Naive thymus-derived CD8-positive, alpha-beta T cell (primary cell): ENCODE measurements at regions of chr6 and their contacts with region 1.

Region 1: DNA sequence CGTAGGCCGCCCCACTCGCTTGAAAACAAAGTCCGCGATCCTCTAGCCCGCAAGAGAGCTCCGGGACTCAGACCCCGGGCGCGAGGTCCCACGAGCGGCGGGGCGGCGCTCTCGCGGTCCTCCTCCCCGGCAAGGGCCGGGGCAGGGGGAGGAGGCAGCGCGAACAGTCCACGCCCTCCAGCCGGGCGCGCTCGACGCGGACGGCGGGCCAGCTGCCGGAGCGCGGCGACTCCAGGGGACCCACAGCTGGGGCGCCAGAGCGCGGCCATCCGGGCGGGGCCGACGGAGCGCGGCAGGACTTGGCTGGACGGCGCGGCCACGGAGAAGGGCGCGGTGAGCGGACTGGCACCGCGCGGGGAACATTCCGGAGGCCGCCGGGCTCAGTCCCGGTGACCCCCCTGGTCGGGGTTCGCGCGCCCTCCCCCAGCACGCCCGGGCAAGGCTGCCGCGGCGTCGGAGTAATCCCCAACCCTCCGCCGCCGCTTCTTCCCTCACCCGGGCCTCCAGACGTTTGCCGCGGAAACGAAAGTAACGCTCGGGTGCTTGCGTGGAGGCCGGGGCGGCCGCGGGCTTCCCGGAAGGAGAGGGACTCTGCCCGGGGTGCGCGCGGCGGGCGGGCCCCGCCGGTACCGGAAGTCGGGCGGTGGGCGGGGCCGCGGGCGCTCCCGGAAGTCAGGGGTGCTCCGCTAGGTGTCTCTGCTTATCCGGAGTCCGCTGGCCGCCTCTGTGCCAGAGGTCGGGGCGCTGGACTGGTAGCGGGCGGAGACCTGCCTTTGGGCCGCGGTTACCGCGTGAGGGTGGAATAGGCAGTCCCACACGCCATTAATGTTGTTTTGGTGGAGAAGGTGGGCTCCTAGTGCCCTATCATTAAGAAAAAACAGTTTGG is at the start of gene RIPK1:
- DNase-seq: peak; percentile 89 to 96 (median 94)
- ATAC-seq: peak; percentile 76 to 78
- H3K4me3 Mint-ChIP-seq: peak within 1 kb of the TSS; percentile 93 to 99 (median 94)
- H3K27ac Mint-ChIP-seq: peak within 1 kb of the TSS; percentile 93 to 99 (median 98)
- H3K4me1 Mint-ChIP-seq: peaks cover 20 to 78% (median 57%) of the 10 kb centered on the region in 4 donors
- H3K27me3 Mint-ChIP-seq: no peaks in the 10 kb centered on the region
- polyA plus RNA-seq, gene RIPK1: 9.5 to 17.5 (median 11.2) TPM

Region 2: DNA sequence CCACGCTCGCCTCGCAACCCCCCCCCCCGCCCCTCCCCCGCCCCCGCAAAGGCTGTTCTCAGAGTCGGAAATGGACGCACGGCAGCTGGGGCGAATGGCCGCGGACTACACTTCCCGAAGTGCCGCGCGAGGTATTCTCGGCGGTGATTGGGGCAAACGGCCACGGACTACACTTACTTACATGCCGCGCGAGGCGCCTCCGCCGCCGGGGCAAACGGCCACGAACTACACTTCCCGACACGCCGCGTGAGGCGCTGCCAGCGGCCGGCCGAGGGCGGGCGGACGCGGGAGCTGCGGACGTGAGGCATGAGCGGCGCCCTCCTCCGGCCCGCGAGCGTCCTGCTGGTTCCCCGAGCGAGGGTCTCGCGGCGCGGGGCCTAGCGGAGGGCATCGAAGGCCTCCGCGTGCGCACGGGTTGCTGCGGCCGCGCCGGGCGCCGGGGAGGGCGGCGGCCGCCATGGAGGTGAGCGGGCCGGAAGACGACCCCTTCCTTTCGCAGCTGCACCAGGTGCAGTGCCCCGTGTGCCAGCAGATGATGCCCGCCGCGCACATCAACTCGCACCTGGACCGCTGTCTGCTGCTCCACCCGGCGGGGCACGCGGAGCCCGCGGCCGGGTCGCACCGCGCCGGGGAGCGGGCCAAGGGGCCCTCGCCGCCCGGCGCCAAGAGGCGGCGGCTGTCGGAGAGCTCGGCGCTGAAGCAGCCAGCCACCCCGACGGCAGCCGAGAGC is 303.2 kb before region 1 on chr6 and contains the start of gene WRNIP1:
- POLR2A ChIA-PET with region 1: interaction called, 16 read pairs
- DNase-seq: peak; percentile 90 to 99 (median 97)
- ATAC-seq: peak; percentile 83 to 86
- H3K4me3 Mint-ChIP-seq: peak within 1 kb of the TSS; percentile 88 to 97 (median 95)
- H3K27ac Mint-ChIP-seq: peak within 1 kb of the TSS; percentile 94 to 100 (median 98)
- H3K4me1 Mint-ChIP-seq: peaks cover 19 to 56% (median 52%) of the 10 kb centered on the region in 4 donors
- H3K27me3 Mint-ChIP-seq: no peaks in the 10 kb centered on the region
- polyA plus RNA-seq, gene WRNIP1: 33.1 to 61.0 (median 36.3) TPM

Region 3: GRCh38 chr6:2999618-3000557 is 68.7 kb before region 1 on chr6 and contains the start of gene NQO2:
- POLR2A ChIA-PET with region 1: interaction called, 13 read pairs
- DNase-seq: peak; percentile 73 to 93 (median 85)
- ATAC-seq: peak; percentile 72 to 79
- H3K4me3 Mint-ChIP-seq: peak within 1 kb of the TSS; percentile 85 to 97 (median 90)
- H3K27ac Mint-ChIP-seq: peak within 1 kb of the TSS; percentile 81 to 97 (median 92)
- H3K4me1 Mint-ChIP-seq: peaks cover 11 to 29% (median 25%) of the 10 kb centered on the region in 4 donors
- H3K27me3 Mint-ChIP-seq: no peaks in the 10 kb centered on the region
- polyA plus RNA-seq, gene NQO2: 37.9 to 48.1 (median 39.0) TPM

Region 4: GRCh38 chr6:3023663-3024483 is 44.7 kb before region 1 on chr6:
- POLR2A ChIA-PET with region 1: interaction called, 10 read pairs
- DNase-seq: peak; percentile 61 to 86 (median 68)
- ATAC-seq: peak; percentile 79 to 83
- H3K4me3 Mint-ChIP-seq: peak overlapping the region; percentile 78 to 97 (median 90)
- H3K27ac Mint-ChIP-seq: peak overlapping the region; percentile 14 to 91 (median 83)
- H3K4me1 Mint-ChIP-seq: peaks cover 23 to 57% (median 54%) of the 10 kb centered on the region in 4 donors
- H3K27me3 Mint-ChIP-seq: no peaks in the 10 kb centered on the region

Region 5: DNA sequence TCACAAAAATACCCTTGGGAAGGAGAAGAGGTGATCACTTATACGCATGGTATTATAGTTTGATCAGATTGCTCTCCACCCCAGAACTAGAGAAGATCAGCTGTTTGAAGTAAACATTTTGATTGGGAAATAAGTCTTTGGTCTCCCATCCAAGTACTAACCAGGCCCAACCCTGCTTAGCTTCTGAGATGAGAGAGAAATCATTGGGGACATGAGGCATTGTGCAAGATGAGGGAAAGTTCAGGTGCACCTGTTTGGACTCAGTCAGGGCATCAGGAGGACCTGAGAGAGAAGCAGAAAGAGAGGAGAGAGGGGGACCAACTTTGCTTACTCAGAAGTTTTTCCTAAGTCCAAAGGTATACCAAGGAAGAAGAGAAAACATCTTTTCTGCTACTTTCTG is 11.1 kb after region 1 on chr6:
- POLR2A ChIA-PET with region 1: interaction called, 13 read pairs
- DNase-seq: no peak
- ATAC-seq: no peak
- H3K4me3 Mint-ChIP-seq: no peak overlapping the region
- H3K27ac Mint-ChIP-seq: peak overlapping the region in 2 of 10 donors; percentile 55 to 68
- H3K4me1 Mint-ChIP-seq: peaks cover 23 to 51% (median 32%) of the 10 kb centered on the region in 4 donors
- H3K27me3 Mint-ChIP-seq: no peaks in the 10 kb centered on the region